ENCODE measurements at regions of chrX and their contacts with region 1.

Region 1: DNA sequence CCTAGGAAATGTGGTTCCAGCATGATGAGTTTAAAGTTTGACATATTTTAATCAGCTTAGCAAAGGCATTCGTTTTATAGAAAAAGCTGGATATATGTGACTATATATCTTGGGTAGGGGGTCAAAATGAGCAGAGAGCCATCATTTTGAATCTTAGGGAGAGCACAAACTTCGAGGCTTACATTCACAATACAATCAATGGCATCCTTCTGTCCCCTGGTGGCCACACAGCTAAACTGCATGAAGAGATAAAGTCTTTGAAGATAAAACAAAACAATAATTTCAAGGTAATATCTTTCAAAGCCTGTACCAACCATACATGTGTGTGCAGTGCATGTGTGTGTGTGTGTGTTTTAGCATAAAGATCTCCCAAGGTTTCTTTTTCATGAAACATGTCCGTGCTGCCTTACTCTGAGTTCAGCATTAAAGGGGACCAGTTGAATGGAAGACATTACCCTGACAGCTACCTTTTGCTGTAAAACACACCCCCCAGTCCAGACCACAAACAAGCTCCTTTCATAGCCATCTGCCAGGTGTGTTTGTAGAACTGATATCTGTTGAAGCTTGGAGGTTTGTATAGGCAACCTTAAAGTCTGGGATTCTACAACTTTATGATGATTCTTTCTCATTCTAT is 22.0 kb downstream of the DYNLT3 start:
- DNase-seq: peak; percentile 8
- ATAC-seq: peak; percentile 52; the same call in 1 of the 2 replicates
- H3K4me3 ChIP-seq: no peak overlapping the region
- H3K27ac ChIP-seq: no peak overlapping the region
- H3K4me1 ChIP-seq: no peaks in the 10 kb centered on the region
- H3K27me3 ChIP-seq: no peaks in the 10 kb centered on the region
- CTCF ChIP-seq: peak; percentile 70 to 77 (median 73); a peak in 5 of 6 replicates
- POLR2A ChIP-seq: no peak
- RAD21 ChIP-seq: peak; percentile 79

Region 2: DNA sequence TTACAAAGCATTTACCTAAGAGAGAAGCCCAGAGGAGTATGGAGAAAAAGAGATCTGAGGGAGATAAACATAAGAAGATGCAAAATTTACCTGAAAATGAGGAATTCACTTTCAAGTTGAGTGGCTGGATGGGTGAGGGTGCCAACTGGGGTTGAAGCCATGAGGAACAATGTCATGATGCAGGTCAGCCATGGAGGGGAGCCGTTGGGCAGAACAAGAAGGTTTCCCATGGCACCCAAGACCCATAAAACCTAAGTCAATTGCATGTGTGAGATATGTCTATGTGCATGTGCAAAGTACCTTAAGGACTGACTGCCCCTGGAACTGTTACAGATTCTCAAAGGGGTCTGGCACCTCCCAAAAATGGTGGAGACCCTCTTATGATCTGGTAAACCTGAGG is 522.8 kb before region 1 on chrX:
- CTCF ChIA-PET with region 1: no interaction called
- POLR2A ChIA-PET with region 1: no interaction called
- RAD21 ChIA-PET with region 1: no interaction called
- intact Hi-C with region 1: loop called (anchors 1 kb)
- DNase-seq: peak; percentile 10
- ATAC-seq: peak; percentile 75
- H3K4me3 ChIP-seq: no peak overlapping the region
- H3K27ac ChIP-seq: no peak overlapping the region
- H3K4me1 ChIP-seq: no peaks in the 10 kb centered on the region
- H3K27me3 ChIP-seq: no peaks in the 10 kb centered on the region
- CTCF ChIP-seq: peak in 2 of 3 experiments; percentile 21 to 41; a peak in 3 of 6 replicates
- POLR2A ChIP-seq: no peak
- RAD21 ChIP-seq: peak; percentile 62

Region 3: GRCh38 chrX:37509349-37509748 is 316.0 kb before region 1 on chrX:
- CTCF ChIA-PET with region 1: no interaction called
- POLR2A ChIA-PET with region 1: no interaction called
- RAD21 ChIA-PET with region 1: no interaction called
- intact Hi-C with region 1: loop called (anchors 5 kb)
- DNase-seq: no peak
- ATAC-seq: peak; percentile 75
- H3K4me3 ChIP-seq: no peak overlapping the region
- H3K27ac ChIP-seq: no peak overlapping the region
- H3K4me1 ChIP-seq: no peaks in the 10 kb centered on the region
- H3K27me3 ChIP-seq: no peaks in the 10 kb centered on the region
- CTCF ChIP-seq: peak; percentile 21 to 35 (median 26); a peak in 4 of 6 replicates
- POLR2A ChIP-seq: no peak
- RAD21 ChIP-seq: peak; percentile 48

Region 4: DNA sequence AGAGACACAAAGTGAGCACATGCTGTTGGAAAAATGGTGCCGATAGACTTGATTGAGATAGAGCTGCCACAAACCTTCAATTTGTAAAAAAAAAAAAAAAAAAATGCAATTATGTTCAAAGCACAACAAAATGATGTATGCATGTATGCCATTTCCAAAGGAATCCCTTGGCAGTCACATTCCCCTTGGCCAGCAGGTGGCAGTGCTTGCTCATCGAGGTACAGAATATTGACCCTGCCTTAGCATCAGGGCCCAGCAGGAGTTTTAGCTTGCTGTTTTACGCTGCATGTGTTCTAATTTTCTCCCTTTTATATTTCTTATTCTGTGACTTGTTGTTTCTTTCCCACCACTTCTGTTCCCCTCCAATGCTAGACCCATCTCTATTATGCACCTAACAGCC is 80.0 kb before region 1 on chrX:
- CTCF ChIA-PET with region 1: interaction called, 7 read pairs
- POLR2A ChIA-PET with region 1: no interaction called
- RAD21 ChIA-PET with region 1: no interaction called
- intact Hi-C with region 1: loop called (anchors 2 kb)
- DNase-seq: peak; percentile 18
- ATAC-seq: peak; percentile 80
- H3K4me3 ChIP-seq: no peak overlapping the region
- H3K27ac ChIP-seq: no peak overlapping the region
- H3K4me1 ChIP-seq: peaks cover 0 to 9% of the 10 kb centered on the region in 2 experiments; a peak in 1 of 4 replicates
- H3K27me3 ChIP-seq: no peaks in the 10 kb centered on the region
- CTCF ChIP-seq: peak; percentile 53 to 69 (median 56)
- POLR2A ChIP-seq: no peak
- RAD21 ChIP-seq: peak; percentile 66

Region 5: DNA sequence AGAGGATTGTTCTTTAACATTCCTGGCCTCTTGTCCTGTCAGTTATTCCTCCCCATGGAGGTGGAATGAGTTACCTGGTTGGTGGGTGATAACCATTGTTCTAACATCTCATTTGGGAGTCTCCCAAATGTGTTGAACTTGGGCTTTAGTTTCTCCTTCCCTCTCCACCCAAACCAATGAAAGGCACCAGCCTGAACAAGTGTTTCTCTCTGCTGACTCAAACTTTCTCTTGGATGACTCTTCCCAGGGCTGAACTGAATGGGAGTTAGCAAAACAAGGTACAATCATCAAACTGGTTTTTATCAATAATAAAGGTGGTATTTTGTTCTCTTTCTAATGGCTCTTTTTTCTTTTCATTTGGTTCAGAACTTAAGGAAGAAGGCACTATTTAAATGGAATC is 19.3 kb after region 1 on chrX:
- CTCF ChIA-PET with region 1: no interaction called
- POLR2A ChIA-PET with region 1: no interaction called
- RAD21 ChIA-PET with region 1: no interaction called
- intact Hi-C with region 1: no loop called
- DNase-seq: no peak
- ATAC-seq: no peak
- H3K4me3 ChIP-seq: no peak overlapping the region
- H3K27ac ChIP-seq: no peak overlapping the region
- H3K4me1 ChIP-seq: peaks cover 0 to 4% of the 10 kb centered on the region in 2 experiments; a peak in 1 of 4 replicates
- H3K27me3 ChIP-seq: no peaks in the 10 kb centered on the region
- CTCF ChIP-seq: no peak
- POLR2A ChIP-seq: no peak
- RAD21 ChIP-seq: no peak

Measured in HCT116 (cell line).